ENCODE measurements at regions of chr16 and their contacts with region 1.

Region 1: GRCh38 chr16:3400779-3401688 is at the starts of genes ZNF174 and ZSCAN32:
- DNase-seq: peak; percentile 99
- H3K4me3 Mint-ChIP-seq: peak within 1 kb of the TSS; percentile 96
- H3K27ac Mint-ChIP-seq: peak within 1 kb of the TSS; percentile 81
- H3K4me1 Mint-ChIP-seq: peaks cover 7% of the 10 kb centered on the region
- H3K27me3 Mint-ChIP-seq: no peaks in the 10 kb centered on the region
- total RNA-seq, gene ZNF174: 9.9 and 10.6 TPM in 2 replicates
- total RNA-seq, gene ZSCAN32: 14.3 and 19.4 TPM in 2 replicates

Region 2: GRCh38 chr16:3158471-3159314 is 242.3 kb before region 1 on chr16:
- intact Hi-C with region 1: no loop called
- DNase-seq: peak; percentile 85
- H3K4me3 Mint-ChIP-seq: peak overlapping the region; percentile 89
- H3K27ac Mint-ChIP-seq: peak overlapping the region; percentile 94
- H3K4me1 Mint-ChIP-seq: peaks cover 40% of the 10 kb centered on the region
- H3K27me3 Mint-ChIP-seq: peaks cover 15% of the 10 kb centered on the region

Region 3: DNA sequence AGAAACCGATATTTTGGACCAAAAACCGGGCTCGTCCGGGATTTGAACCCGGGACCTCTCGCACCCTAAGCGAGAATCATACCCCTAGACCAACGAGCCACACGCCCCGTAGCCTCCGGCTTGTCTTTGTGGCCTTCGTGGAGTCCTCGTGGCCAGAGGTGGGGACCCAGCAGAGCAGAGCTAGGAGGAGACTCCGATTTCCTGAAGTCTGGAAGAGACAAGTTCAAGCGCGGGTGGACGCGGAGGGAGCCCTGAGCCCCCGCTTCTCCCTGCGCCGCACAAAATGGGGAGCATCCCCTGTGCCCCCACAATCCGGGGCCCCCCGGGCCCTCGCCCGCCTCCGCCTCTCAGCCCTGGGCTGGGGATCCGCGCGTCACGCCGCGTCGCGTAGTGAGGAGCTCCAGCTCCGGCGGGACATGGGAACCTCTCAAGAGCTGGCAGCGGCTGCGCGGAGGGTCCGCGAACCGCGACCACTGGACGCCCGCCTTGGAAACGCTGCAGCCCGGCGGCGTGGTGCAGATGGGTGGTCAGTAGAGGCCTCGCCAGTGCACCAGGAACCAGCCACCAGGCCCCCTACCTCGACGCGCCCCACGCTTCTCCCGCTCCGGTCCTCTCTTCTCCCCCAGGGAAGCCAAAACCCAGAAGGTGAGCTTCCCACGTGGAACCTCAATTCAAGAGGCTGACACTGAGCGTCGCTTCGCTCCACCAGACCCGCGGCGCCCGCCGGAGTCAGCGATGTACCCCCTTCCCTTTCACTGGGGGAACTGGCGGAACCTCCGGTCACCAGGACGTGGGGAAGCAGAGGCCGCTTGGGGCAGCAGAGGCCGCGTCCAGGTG is 218.2 kb before region 1 on chr16:
- intact Hi-C with region 1: loop called (anchors 10 kb)
- DNase-seq: no peak
- H3K4me3 Mint-ChIP-seq: peak overlapping the region; percentile 83
- H3K27ac Mint-ChIP-seq: peak overlapping the region; percentile 94
- H3K4me1 Mint-ChIP-seq: peaks cover 28% of the 10 kb centered on the region
- H3K27me3 Mint-ChIP-seq: peaks cover 68% of the 10 kb centered on the region

Region 4: GRCh38 chr16:3264137-3265036 is 136.6 kb before region 1 on chr16:
- intact Hi-C with region 1: loop called (anchors 1 kb)
- DNase-seq: peak; percentile 95
- H3K4me3 Mint-ChIP-seq: peak overlapping the region; percentile 89
- H3K27ac Mint-ChIP-seq: peak overlapping the region; percentile 92
- H3K4me1 Mint-ChIP-seq: peaks cover 20% of the 10 kb centered on the region
- H3K27me3 Mint-ChIP-seq: no peaks in the 10 kb centered on the region

Region 5: DNA sequence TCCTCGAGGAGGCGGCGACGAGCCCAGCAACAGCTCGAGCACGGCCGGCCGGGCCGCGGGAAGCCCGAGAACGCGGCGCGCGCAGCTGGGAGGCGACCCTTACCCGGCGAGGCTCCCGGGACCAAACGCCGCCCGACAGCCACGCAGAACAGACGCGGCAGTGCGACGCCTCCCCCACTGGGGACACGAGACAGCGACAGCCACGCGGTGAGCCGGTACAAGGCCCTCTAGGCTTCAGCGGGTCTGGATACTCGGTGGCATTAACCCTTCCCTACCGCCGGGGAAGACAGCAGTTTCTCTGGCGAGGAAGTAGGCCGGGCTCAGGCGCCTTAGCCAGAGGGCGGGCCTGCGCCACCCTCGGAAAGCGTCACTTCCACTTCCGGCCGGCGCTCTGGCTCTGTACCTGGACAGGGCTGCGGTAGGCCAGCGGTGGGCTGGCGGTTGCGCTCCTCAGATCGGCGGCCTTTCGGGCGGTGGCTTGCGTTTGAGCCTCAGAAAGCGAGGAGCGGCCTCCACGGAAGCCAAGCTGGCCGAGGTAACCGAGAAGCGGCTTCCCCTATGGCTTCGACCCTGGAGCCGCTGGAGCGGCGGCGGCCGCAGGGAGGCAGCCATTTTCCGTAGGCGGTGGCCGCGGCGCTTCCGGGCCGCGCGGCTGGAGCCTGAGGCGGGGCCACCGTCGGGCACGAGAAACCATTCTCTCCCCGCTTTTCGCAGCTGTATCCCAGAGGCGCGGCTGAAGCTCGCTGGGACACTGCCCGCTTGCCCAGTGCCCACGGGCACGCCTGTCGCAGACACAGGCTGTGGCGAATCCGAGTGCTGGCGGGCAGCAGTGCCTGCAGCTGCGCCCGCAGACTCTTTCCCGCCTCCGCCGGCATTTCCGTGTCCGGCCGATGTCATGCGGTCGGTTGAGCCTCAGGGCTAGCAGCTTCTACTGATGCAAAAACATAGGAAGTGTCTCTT is 95.6 kb before region 1 on chr16 and contains the starts of genes TIGD7 and ZNF75A:
- intact Hi-C with region 1: loop called (anchors 1 kb)
- DNase-seq: peak; percentile 79
- H3K4me3 Mint-ChIP-seq: peak within 1 kb of the TSS; percentile 75
- H3K27ac Mint-ChIP-seq: peak within 1 kb of the TSS; percentile 70
- H3K4me1 Mint-ChIP-seq: peaks cover 8% of the 10 kb centered on the region
- H3K27me3 Mint-ChIP-seq: no peaks in the 10 kb centered on the region
- total RNA-seq, gene TIGD7: 2.0 and 3.1 TPM in 2 replicates
- total RNA-seq, gene ZNF75A: 26.5 and 27.6 TPM in 2 replicates

Region 6: GRCh38 chr16:3443108-3444031 is 42.3 kb after region 1 on chr16 and contains the starts of genes NAA60 and ZNF597:
- intact Hi-C with region 1: loop called (anchors 1 kb)
- DNase-seq: peak; percentile 79
- H3K4me3 Mint-ChIP-seq: peak within 1 kb of the TSS; percentile 99
- H3K27ac Mint-ChIP-seq: peak within 1 kb of the TSS; percentile 98
- H3K4me1 Mint-ChIP-seq: peaks cover 15% of the 10 kb centered on the region
- H3K27me3 Mint-ChIP-seq: no peaks in the 10 kb centered on the region
- total RNA-seq, gene NAA60: 35.4 and 38.3 TPM in 2 replicates
- total RNA-seq, gene ZNF597: 2.6 TPM in 2 replicates

Region 7: DNA sequence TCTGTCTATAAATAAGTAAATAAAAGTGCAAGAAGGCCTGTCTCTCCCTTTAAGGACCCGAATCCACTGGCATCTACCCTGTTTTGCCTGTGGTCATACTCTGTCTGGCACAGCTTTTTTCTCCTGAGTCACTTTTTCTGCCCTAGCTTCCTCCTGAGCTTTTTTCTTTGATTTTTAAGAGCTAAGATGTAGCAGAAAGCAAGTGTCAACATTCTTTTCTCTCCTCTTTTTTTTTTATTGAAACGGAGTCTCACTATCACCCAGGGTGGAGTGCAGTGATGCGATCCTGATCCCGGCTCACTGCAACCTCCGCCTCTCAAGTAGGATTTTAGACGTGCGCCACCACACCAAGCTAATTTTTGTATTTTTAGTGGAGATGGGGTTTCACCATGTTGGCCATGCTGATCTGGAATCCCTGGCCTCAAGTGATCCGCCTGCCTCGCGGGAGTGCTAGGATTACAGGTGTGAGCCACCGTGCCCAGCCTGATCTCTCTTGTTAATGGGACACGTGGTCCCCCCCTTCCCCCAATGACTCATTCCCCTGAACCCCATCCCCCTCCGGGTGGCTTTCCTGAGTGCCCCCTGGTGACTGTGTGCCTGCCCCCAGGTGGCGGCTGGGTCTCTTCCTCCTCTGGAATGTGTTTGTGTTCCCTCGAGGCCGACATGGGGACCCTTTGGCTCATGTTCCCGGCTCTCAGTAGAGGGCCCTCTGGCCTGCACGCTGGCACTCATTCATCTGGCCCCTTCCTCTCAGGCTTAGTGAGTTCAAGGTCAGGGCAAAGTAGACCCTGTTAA is 80.1 kb after region 1 on chr16:
- intact Hi-C with region 1: no loop called
- DNase-seq: no peak
- H3K4me3 Mint-ChIP-seq: no peak overlapping the region
- H3K27ac Mint-ChIP-seq: no peak overlapping the region
- H3K4me1 Mint-ChIP-seq: peaks cover 12% of the 10 kb centered on the region
- H3K27me3 Mint-ChIP-seq: no peaks in the 10 kb centered on the region

Region 8: DNA sequence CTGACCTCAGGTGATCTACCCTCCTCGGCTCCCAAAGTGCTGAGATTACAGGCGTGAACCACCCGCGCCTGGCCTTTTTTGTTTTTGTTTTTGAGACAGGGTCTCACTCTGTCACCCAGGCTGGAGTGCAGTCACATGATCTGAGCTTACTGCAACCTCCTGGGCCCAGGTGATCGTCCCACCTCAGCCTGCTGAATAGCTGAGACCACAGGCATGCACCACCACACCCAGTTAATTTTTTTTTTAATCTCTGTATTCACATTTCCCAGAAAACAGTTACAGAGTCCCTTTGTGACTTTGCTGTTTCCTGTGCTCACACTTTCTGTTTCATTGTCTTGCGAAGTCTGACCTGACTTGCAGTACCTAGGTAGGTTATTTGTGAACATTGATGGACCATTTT is 102.5 kb after region 1 on chr16:
- intact Hi-C with region 1: loop called (anchors 1 kb)
- DNase-seq: peak; percentile 65
- H3K4me3 Mint-ChIP-seq: peak overlapping the region; percentile 77
- H3K27ac Mint-ChIP-seq: peak overlapping the region; percentile 90
- H3K4me1 Mint-ChIP-seq: peaks cover 68% of the 10 kb centered on the region
- H3K27me3 Mint-ChIP-seq: peaks cover 3% of the 10 kb centered on the region

Measured in activated T-helper 1 cell treated with anti-CD3 and anti-CD28 coated beads, Interleukin-12 subunit alpha, Interleukin-12 subunit beta, Interleukin-2, Interleukin-4 antibody, amounts not matched to agents 30 ng/mL and 10 ng/mL and 1 ng/mL, durations not matched to agents 14 hours and 24 hours and 36 hours (primary cell).